ENCODE measurements at regions of chr5 and their contacts with region 1.

Region 1: GRCh38 chr5:155943516-155944407 is 383.2 kb upstream of the SGCD start:
- DNase-seq: peak; percentile 31
- ATAC-seq: peak; percentile 92
- H3K4me3 ChIP-seq: no peak overlapping the region
- H3K27ac ChIP-seq: no peak overlapping the region
- H3K4me1 ChIP-seq: no peaks in the 10 kb centered on the region
- H3K27me3 ChIP-seq: no peaks in the 10 kb centered on the region
- CTCF ChIP-seq: peak; percentile 70
- EP300 ChIP-seq: no peak
- POLR2A ChIP-seq: no peak
- RAD21 ChIP-seq: no peak

Region 2: GRCh38 chr5:156815988-156816599 is 872.3 kb after region 1 on chr5:
- CTCF ChIA-PET with region 1: no interaction called
- POLR2A ChIA-PET with region 1: no interaction called
- in situ Hi-C with region 1: loop called (anchors 10 kb)
- intact Hi-C with region 1: loop called (anchors 2 kb)
- DNase-seq: peak; percentile 14
- ATAC-seq: peak; percentile 71
- H3K4me3 ChIP-seq: no peak overlapping the region
- H3K27ac ChIP-seq: no peak overlapping the region
- H3K4me1 ChIP-seq: no peaks in the 10 kb centered on the region
- H3K27me3 ChIP-seq: no peaks in the 10 kb centered on the region; a peak in 1 of 5 replicates
- CTCF ChIP-seq: peak; percentile 65
- EP300 ChIP-seq: no peak
- POLR2A ChIP-seq: no peak
- RAD21 ChIP-seq: peak; percentile 34; the same call in 1 of the 2 replicates

Region 3: GRCh38 chr5:156824800-156825199 is 881.0 kb after region 1 on chr5:
- CTCF ChIA-PET with region 1: no interaction called
- POLR2A ChIA-PET with region 1: no interaction called
- in situ Hi-C with region 1: loop called (anchors 10 kb)
- intact Hi-C with region 1: loop called (anchors 1 kb)
- DNase-seq: peak; percentile 26
- ATAC-seq: peak; percentile 50; the same call in 2 of the 3 replicates
- H3K4me3 ChIP-seq: no peak overlapping the region
- H3K27ac ChIP-seq: no peak overlapping the region
- H3K4me1 ChIP-seq: no peaks in the 10 kb centered on the region
- H3K27me3 ChIP-seq: no peaks in the 10 kb centered on the region; a peak in 1 of 5 replicates
- CTCF ChIP-seq: peak; percentile 56
- EP300 ChIP-seq: no peak
- POLR2A ChIP-seq: no peak
- RAD21 ChIP-seq: no peak

Region 4: GRCh38 chr5:156934450-156935211 is 990.9 kb after region 1 on chr5:
- CTCF ChIA-PET with region 1: interaction called, 3 read pairs
- POLR2A ChIA-PET with region 1: no interaction called
- in situ Hi-C with region 1: no loop called
- intact Hi-C with region 1: loop called (anchors 10 kb)
- DNase-seq: peak; percentile 9
- ATAC-seq: 0 out of 3 replicates have a peak, but pooled peaks have one; percentile 30
- H3K4me3 ChIP-seq: no peak overlapping the region
- H3K27ac ChIP-seq: no peak overlapping the region
- H3K4me1 ChIP-seq: peaks cover 12% of the 10 kb centered on the region; the same call in 1 of the 2 replicates
- H3K27me3 ChIP-seq: no peaks in the 10 kb centered on the region; a peak in 1 of 5 replicates
- CTCF ChIP-seq: peak; percentile 52
- EP300 ChIP-seq: no peak
- POLR2A ChIP-seq: no peak
- RAD21 ChIP-seq: no peak